MCF 10A (cell line): ENCODE measurements at regions of chr3 and their contacts with region 1.

Region 1: GRCh38 chr3:117719316-117719926 is 1009.8 kb downstream of the TUSC7 start:
- DNase-seq: peak; percentile 29
- H3K4me3 Mint-ChIP-seq: no peak overlapping the region
- H3K27ac Mint-ChIP-seq: no peak overlapping the region
- H3K4me1 Mint-ChIP-seq: no peaks in the 10 kb centered on the region
- H3K27me3 Mint-ChIP-seq: no peaks in the 10 kb centered on the region
- CTCF ChIP-seq: peak; percentile 70

Region 2: DNA sequence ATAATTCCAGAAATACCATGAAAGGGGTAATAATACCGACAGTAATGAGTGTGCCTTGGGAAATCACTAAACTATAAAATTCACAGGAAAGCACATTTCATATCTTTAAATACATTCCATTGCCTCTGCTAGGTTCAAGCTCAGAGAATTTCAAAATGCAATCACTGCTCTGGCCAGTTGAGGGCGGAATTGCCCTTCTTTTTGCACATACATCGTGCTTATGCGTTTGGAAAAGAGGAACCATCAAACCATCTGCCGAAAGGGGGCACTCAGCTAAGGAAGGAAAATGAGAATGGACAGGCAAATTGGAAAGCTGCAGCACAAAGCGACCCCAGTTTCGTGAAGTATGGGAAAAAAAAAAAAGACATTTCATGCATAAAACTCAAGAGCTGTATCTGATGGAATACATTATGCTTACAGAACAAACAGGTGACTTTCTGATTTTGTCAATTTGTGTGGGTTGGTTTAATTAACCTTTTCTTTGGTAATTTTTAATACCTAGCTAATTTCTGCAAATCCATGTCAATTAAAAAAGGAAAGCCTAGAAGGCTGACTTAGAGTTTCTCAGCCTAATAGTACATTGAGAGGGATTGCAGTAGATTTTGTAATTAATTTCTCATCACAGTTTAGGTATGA is 948.5 kb before region 1 on chr3:
- CTCF ChIA-PET with region 1: interaction called, 8 read pairs
- POLR2A ChIA-PET with region 1: no interaction called
- intact Hi-C with region 1: loop called (anchors 1 kb)
- DNase-seq: peak; percentile 77
- H3K4me3 Mint-ChIP-seq: no peak overlapping the region
- H3K27ac Mint-ChIP-seq: no peak overlapping the region
- H3K4me1 Mint-ChIP-seq: no peaks in the 10 kb centered on the region
- H3K27me3 Mint-ChIP-seq: peaks cover 90% of the 10 kb centered on the region
- CTCF ChIP-seq: peak; percentile 87

Region 3: DNA sequence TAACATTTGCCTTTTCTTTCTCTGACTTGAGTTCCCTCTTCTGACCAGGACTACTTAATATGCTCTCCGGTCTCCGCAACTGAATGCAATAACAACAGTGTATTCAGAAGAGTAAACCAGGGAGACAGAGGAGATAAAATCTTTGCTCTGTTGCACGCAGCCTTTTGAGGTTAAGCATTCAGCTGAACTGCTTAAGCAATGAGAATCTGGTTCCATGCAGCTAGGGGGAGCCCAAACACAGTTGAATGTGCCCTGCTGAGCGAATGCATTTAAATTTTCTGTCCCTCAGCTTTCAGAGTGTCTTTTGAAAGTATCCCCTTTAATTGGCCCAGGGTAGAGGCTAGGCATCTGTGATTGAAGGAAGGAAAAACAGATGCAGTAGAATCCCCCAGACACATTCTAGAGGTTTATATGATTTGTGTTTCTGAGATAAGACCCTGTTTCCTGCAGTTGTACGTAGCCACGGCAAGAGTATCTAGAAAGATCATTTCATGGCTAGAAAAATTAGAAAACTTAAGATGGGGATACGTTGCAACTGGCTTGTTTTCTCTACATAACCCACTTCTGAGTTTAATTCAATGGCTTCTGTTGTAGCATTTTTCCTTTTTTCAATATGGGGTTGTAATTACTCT is 700.2 kb before region 1 on chr3:
- CTCF ChIA-PET with region 1: interaction called, 7 read pairs
- POLR2A ChIA-PET with region 1: no interaction called
- intact Hi-C with region 1: loop called (anchors 1 kb)
- DNase-seq: peak; percentile 60
- H3K4me3 Mint-ChIP-seq: no peak overlapping the region
- H3K27ac Mint-ChIP-seq: no peak overlapping the region
- H3K4me1 Mint-ChIP-seq: no peaks in the 10 kb centered on the region
- H3K27me3 Mint-ChIP-seq: peaks cover 83% of the 10 kb centered on the region
- CTCF ChIP-seq: peak; percentile 74

Region 4: GRCh38 chr3:117407317-117407716 is 312.1 kb before region 1 on chr3:
- CTCF ChIA-PET with region 1: interaction called, 3 read pairs
- POLR2A ChIA-PET with region 1: interaction called, 3 read pairs
- intact Hi-C with region 1: loop called (anchors 5 kb)
- DNase-seq: peak; percentile 35
- H3K4me3 Mint-ChIP-seq: no peak overlapping the region
- H3K27ac Mint-ChIP-seq: no peak overlapping the region
- H3K4me1 Mint-ChIP-seq: peaks cover 6% of the 10 kb centered on the region
- H3K27me3 Mint-ChIP-seq: no peaks in the 10 kb centered on the region
- CTCF ChIP-seq: peak; percentile 42

Region 5: GRCh38 chr3:117616227-117616626 is 103.2 kb before region 1 on chr3:
- CTCF ChIA-PET with region 1: interaction called, 3 read pairs
- POLR2A ChIA-PET with region 1: no interaction called
- intact Hi-C with region 1: loop called (anchors 1 kb)
- DNase-seq: no peak
- H3K4me3 Mint-ChIP-seq: no peak overlapping the region
- H3K27ac Mint-ChIP-seq: no peak overlapping the region
- H3K4me1 Mint-ChIP-seq: no peaks in the 10 kb centered on the region
- H3K27me3 Mint-ChIP-seq: no peaks in the 10 kb centered on the region
- CTCF ChIP-seq: peak; percentile 11

Region 6: DNA sequence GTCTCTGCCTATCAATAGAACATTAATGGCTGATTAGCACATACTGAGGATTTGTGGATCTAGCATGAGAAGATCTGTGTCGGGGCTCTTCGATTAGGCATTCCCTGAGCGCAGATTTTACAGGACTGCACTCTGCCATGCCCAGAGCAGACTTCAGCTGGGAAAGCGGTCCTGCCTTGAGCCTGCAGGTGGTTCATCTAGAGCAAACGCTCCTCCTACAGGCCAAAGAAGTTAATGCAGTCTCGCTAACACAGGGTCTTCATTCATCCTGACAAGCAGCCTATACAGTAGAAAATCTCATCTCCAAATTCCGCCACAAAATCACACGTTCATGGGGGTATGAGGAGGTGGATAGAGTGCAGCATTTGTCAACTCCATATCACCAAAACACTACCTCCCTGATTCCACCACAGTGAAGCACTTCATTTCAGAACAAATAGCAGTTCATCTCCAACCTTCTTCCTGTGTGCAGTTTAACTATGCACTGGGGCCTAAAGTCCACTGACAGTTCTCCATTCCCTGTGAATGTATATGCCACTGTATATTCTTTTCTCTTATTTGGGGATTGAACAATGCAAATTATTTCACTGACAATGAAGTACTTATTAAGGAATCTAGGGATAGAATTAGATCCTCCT is 909.4 kb after region 1 on chr3:
- CTCF ChIA-PET with region 1: interaction called, 3 read pairs
- POLR2A ChIA-PET with region 1: no interaction called
- intact Hi-C with region 1: loop called (anchors 2 kb)
- DNase-seq: peak; percentile 79
- H3K4me3 Mint-ChIP-seq: no peak overlapping the region
- H3K27ac Mint-ChIP-seq: no peak overlapping the region
- H3K4me1 Mint-ChIP-seq: no peaks in the 10 kb centered on the region
- H3K27me3 Mint-ChIP-seq: no peaks in the 10 kb centered on the region
- CTCF ChIP-seq: peak; percentile 92